Activated T-helper 1 cell treated with anti-CD3 and anti-CD28 coated beads, Interleukin-12 subunit alpha, Interleukin-12 subunit beta, Interleukin-2, Interleukin-4 antibody, amounts not matched to agents 30 ng/mL and 10 ng/mL and 1 ng/mL, durations not matched to agents 14 hours and 24 hours and 36 hours (primary cell): ENCODE measurements at regions of chr1 and their contacts with region 1.

Region 1: GRCh38 chr1:92623187-92623778 is 136.6 kb upstream of the GFI1 start:
- DNase-seq: no peak
- H3K4me3 Mint-ChIP-seq: no peak overlapping the region
- H3K27ac Mint-ChIP-seq: no peak overlapping the region
- H3K4me1 Mint-ChIP-seq: no peaks in the 10 kb centered on the region
- H3K27me3 Mint-ChIP-seq: peaks cover 9% of the 10 kb centered on the region

Region 2: DNA sequence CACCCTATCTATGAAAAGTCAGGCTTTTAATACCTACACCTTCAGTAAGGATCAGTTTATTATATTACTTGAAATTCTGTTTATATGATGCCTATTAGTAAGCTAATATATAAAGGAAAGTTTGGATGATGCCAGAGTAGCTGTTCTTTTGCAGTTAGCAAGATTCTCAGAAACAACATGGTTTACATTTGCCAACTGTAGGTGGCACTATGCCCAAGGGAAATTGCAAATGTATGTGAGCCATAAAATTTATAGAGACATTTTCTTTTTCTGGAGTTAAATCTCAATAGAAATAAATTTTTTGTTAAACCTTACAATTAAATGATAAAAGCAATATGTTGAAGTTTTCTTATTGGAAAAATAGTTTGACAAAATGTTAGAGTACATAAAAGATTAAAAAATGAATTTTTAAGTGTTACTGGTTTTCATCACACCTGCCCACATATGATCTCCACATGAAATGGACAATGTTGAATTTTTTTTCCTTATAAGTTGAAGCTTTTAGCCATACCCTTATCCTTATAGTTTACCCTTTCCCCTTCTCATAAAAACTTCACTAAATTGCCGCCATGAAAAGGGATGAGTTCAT is 625.6 kb before region 1 on chr1:
- intact Hi-C with region 1: loop called (anchors 1 kb)
- DNase-seq: peak; percentile 2
- H3K4me3 Mint-ChIP-seq: no peak overlapping the region
- H3K27ac Mint-ChIP-seq: no peak overlapping the region
- H3K4me1 Mint-ChIP-seq: no peaks in the 10 kb centered on the region
- H3K27me3 Mint-ChIP-seq: peaks cover 10% of the 10 kb centered on the region

Region 3: GRCh38 chr1:92298573-92299476 is 324.5 kb before region 1 on chr1 and contains the starts of genes GLMN and RPAP2:
- intact Hi-C with region 1: loop called (anchors 2 kb)
- DNase-seq: peak; percentile 74
- H3K4me3 Mint-ChIP-seq: peak within 1 kb of the TSS; percentile 97
- H3K27ac Mint-ChIP-seq: peak within 1 kb of the TSS; percentile 99
- H3K4me1 Mint-ChIP-seq: peaks cover 40% of the 10 kb centered on the region
- H3K27me3 Mint-ChIP-seq: no peaks in the 10 kb centered on the region
- total RNA-seq, gene GLMN: 29.2 and 29.7 TPM in 2 replicates
- total RNA-seq, gene RPAP2: 42.0 and 44.8 TPM in 2 replicates

Region 4: GRCh38 chr1:92317836-92318493 is 305.3 kb before region 1 on chr1:
- intact Hi-C with region 1: loop called (anchors 1 kb)
- DNase-seq: no peak
- H3K4me3 Mint-ChIP-seq: peak overlapping the region; percentile 66
- H3K27ac Mint-ChIP-seq: peak overlapping the region; percentile 91
- H3K4me1 Mint-ChIP-seq: peaks cover 68% of the 10 kb centered on the region
- H3K27me3 Mint-ChIP-seq: no peaks in the 10 kb centered on the region

Region 5: GRCh38 chr1:92515796-92516201 is 107.5 kb before region 1 on chr1:
- intact Hi-C with region 1: no loop called
- DNase-seq: no peak
- H3K4me3 Mint-ChIP-seq: no peak overlapping the region
- H3K27ac Mint-ChIP-seq: no peak overlapping the region
- H3K4me1 Mint-ChIP-seq: peaks cover 24% of the 10 kb centered on the region
- H3K27me3 Mint-ChIP-seq: no peaks in the 10 kb centered on the region

Region 6: DNA sequence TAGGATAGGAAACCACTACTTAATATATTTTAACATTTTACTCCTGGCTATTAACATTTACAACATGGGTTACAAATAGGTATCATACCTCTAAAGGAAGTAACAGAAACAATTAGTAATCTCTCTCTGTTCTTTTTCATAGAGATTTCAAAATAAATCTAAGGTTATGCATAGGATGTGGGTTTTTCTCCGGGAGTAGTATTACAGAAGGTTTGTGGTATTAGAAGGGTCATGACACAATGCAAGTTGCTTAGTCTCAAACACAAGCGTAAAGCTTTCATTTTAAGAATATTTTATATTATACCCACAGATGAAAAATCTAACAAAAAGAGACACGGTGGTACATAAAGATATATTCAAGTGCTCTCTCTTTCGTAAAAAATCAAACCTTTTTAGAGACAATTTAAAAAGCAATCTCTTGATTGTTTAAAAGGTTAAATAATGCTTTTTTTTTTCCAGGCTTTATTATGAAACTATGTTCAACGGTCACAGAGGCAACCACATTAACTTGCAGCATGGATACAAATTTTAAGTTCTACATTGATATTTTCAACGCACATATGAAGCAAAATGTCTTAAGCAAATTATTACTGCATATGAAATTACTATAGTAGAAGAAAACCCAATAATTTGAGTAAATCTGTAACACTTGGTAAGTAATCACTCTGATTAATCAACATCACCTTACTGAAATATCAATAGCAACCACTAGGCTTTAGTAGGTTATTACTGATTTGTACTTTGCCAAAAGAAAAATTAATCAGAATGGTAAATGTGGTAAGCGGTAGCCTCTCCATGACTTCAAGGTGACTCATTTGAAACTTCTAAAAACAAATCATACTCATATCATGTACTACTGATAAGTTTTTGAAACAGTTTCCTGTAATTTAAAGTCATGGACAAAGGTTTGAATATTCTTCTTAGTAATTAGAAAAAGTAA is 39.2 kb before region 1 on chr1:
- intact Hi-C with region 1: loop called (anchors 2 kb)
- DNase-seq: no peak
- H3K4me3 Mint-ChIP-seq: peak overlapping the region; percentile 62
- H3K27ac Mint-ChIP-seq: peak overlapping the region; percentile 91
- H3K4me1 Mint-ChIP-seq: peaks cover 75% of the 10 kb centered on the region
- H3K27me3 Mint-ChIP-seq: no peaks in the 10 kb centered on the region

Region 7: GRCh38 chr1:92784639-92785500 is 161.6 kb after region 1 on chr1 and contains the start of gene EVI5:
- intact Hi-C with region 1: no loop called
- DNase-seq: peak; percentile 28
- H3K4me3 Mint-ChIP-seq: peak within 1 kb of the TSS; percentile 75
- H3K27ac Mint-ChIP-seq: peak within 1 kb of the TSS; percentile 61
- H3K4me1 Mint-ChIP-seq: peaks cover 14% of the 10 kb centered on the region
- H3K27me3 Mint-ChIP-seq: peaks cover 77% of the 10 kb centered on the region
- total RNA-seq, gene EVI5: 11.0 and 11.3 TPM in 2 replicates